ENCODE measurements at regions of chr9 and their contacts with region 1.

Region 1: GRCh38 chr9:34546834-34547827 is 24.3 kb upstream of the ENHO start:
- DNase-seq: peak in 1 of 2 experiments; percentile 41
- H3K4me3 ChIP-seq: no peak overlapping the region
- H3K27ac ChIP-seq: no peak overlapping the region
- H3K4me1 ChIP-seq: no peaks in the 10 kb centered on the region
- H3K27me3 ChIP-seq: peaks cover 23% of the 10 kb centered on the region; the same call in 1 of the 2 replicates
- CTCF ChIP-seq: peak; percentile 72

Region 2: GRCh38 chr9:34332076-34332964 is 214.8 kb before region 1 on chr9:
- CTCF ChIA-PET with region 1: no interaction called
- POLR2A ChIA-PET with region 1: no interaction called
- intact Hi-C with region 1: loop called (anchors 5 kb)
- DNase-seq: no peak
- H3K4me3 ChIP-seq: no peak overlapping the region
- H3K27ac ChIP-seq: no peak overlapping the region
- H3K4me1 ChIP-seq: peaks cover 4% of the 10 kb centered on the region; the same call in 1 of the 2 replicates
- H3K27me3 ChIP-seq: no peaks in the 10 kb centered on the region
- CTCF ChIP-seq: peak; percentile 50

Region 3: GRCh38 chr9:34506623-34507022 is 40.5 kb before region 1 on chr9:
- CTCF ChIA-PET with region 1: no interaction called
- POLR2A ChIA-PET with region 1: interaction called, 14 read pairs
- intact Hi-C with region 1: no loop called
- DNase-seq: no peak
- H3K4me3 ChIP-seq: no peak overlapping the region
- H3K27ac ChIP-seq: no peak overlapping the region
- H3K4me1 ChIP-seq: no peaks in the 10 kb centered on the region
- H3K27me3 ChIP-seq: 0 out of 2 replicates have a peak, but pooled peaks cover 7% of the 10 kb centered on the region
- CTCF ChIP-seq: no peak

Region 4: GRCh38 chr9:34591248-34591916 is 44.3 kb after region 1 on chr9:
- CTCF ChIA-PET with region 1: interaction called, 3 read pairs
- POLR2A ChIA-PET with region 1: no interaction called
- intact Hi-C with region 1: loop called (anchors 1 kb)
- DNase-seq: peak; percentile 49 to 75
- H3K4me3 ChIP-seq: no peak overlapping the region
- H3K27ac ChIP-seq: no peak overlapping the region
- H3K4me1 ChIP-seq: no peaks in the 10 kb centered on the region
- H3K27me3 ChIP-seq: peaks cover 24% of the 10 kb centered on the region
- CTCF ChIP-seq: peak; percentile 80